Mammary epithelial cell (primary cell): ENCODE measurements at regions of chr21 and their contacts with region 1.

Region 1: DNA sequence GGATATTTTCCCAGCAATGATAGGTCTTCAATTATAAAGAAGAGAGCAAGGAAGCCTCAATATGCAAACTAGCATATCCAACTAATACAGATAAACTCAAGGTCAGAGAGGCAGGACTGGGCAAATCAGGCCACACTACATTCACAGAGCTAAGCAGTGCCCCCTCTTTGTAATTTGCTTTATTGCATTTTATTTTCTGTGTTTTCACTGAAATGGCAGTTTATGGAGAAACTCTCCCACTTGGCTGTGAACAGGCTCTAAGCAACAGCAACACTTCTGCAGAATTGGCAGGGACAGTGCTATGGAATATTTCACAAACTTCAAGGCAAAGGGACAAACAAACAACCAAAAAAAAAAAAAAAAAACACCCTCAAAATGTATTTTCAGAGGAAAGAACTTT is 93.4 kb upstream of the SOD1 start:
- DNase-seq: no peak
- H3K4me3 ChIP-seq: no peak overlapping the region
- H3K27ac ChIP-seq: no peak overlapping the region
- H3K4me1 ChIP-seq: no peaks in the 10 kb centered on the region
- H3K27me3 ChIP-seq: no peaks in the 10 kb centered on the region
- CTCF ChIP-seq: peak in 1 of 2 donors; percentile 12

Region 2: DNA sequence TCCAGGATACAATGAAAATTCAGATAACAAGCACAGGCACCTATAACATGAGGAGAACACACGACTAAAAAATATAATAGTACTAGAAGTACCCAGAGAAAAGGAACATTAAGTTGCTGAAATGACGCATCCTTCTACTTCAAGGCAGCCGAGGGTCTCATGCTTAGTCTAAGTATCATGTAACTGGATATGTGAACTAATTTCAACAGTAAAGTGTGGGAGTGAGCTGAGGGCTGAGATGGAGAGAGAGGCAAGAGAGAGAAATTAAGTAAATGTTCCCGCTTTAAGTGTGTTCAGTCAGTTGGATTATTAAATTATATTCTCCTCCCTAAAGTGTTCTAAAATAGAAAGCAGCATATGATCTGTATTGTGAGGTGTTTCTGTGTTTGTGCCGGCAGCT is 375.5 kb before region 1 on chr21:
- CTCF ChIA-PET with region 1: no interaction called
- dilution Hi-C with region 1: loop called (anchors 5 kb)
- in situ Hi-C with region 1: no loop called
- intact Hi-C with region 1: no loop called
- DNase-seq: no peak
- H3K4me3 ChIP-seq: no peak overlapping the region
- H3K27ac ChIP-seq: no peak overlapping the region
- H3K4me1 ChIP-seq: no peaks in the 10 kb centered on the region
- H3K27me3 ChIP-seq: no peaks in the 10 kb centered on the region
- CTCF ChIP-seq: no peak